Right cardiac atrium (tissue), 5 donors: ENCODE measurements at regions of chr11 and their contacts with region 1.

Region 1: GRCh38 chr11:122505304-122506006 is 150.1 kb upstream of the UBASH3B start:
- DNase-seq: peak; percentile 81 to 93 (median 83)
- ATAC-seq: peak; percentile 97 to 98
- H3K4me3 ChIP-seq: no peak overlapping the region
- H3K27ac ChIP-seq: no peak overlapping the region
- H3K4me1 ChIP-seq: peaks cover 2% of the 10 kb centered on the region
- H3K27me3 ChIP-seq: no peaks in the 10 kb centered on the region

Region 2: DNA sequence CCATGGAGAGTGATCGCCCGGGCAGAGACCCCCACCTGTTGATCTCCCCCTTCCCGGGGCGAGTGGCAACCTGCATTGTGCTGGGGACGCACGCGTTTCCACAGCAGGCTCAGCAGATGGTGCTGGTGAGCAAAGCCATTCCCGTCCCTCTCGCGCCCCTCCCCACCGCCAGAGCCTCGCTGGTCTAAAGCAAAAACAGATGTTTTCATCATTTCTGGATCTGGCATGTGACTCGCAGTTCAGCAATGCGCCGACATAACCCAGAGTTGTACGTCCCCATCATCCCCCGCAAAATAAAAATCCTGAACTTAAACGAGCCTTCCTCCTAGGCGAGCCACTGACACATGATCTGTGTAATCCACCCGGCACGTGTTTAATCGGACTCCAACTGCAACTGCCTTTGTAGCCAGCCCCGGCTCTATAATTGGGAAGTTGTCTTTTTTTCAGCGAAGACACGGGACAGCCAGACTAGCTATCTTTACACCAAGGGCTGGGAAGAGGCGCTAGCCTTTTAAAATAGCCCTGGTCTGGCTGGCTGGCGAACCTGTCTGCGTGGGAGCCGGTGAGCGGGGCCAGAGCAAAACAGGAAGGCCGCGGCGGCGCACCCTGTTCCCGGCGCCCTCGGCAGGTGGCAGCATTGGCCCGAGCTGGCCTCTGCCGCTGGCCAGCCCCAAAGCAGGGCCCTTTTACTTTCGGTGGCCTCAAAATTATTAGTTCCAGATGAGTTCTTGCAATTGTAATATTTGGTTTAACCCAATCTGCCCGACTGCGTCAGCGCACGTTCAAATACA is 849.7 kb before region 1 on chr11:
- intact Hi-C with region 1: loop called (anchors 2 to 5 kb)
- DNase-seq: peak; percentile 88 to 96 (median 95)
- ATAC-seq: peak; percentile 96 to 97
- H3K4me3 ChIP-seq: peak overlapping the region; percentile 48
- H3K27ac ChIP-seq: peak overlapping the region; percentile 93
- H3K4me1 ChIP-seq: peaks cover 1% of the 10 kb centered on the region
- H3K27me3 ChIP-seq: no peaks in the 10 kb centered on the region

Region 3: GRCh38 chr11:122101625-122102291 is 403.7 kb before region 1 on chr11:
- intact Hi-C with region 1: loop called in 1 of 4 experiments (anchors 5 kb)
- DNase-seq: peak; percentile 61 to 84 (median 82)
- ATAC-seq: peak; percentile 86 to 91
- H3K4me3 ChIP-seq: peak overlapping the region; percentile 91
- H3K27ac ChIP-seq: peak overlapping the region; percentile 98
- H3K4me1 ChIP-seq: no peaks in the 10 kb centered on the region
- H3K27me3 ChIP-seq: no peaks in the 10 kb centered on the region

Region 4: GRCh38 chr11:122215244-122215992 is 290.0 kb before region 1 on chr11:
- intact Hi-C with region 1: loop called (anchors 5 to 10 kb)
- DNase-seq: peak; percentile 85 to 95 (median 93)
- ATAC-seq: peak; percentile 97
- H3K4me3 ChIP-seq: no peak overlapping the region
- H3K27ac ChIP-seq: peak overlapping the region; percentile 43
- H3K4me1 ChIP-seq: peaks cover 1% of the 10 kb centered on the region
- H3K27me3 ChIP-seq: no peaks in the 10 kb centered on the region

Region 5: GRCh38 chr11:122439911-122440810 is 65.3 kb before region 1 on chr11:
- intact Hi-C with region 1: loop called in 1 of 4 experiments (anchors 10 kb)
- DNase-seq: peak; percentile 64 to 81 (median 77)
- ATAC-seq: peak; percentile 90
- H3K4me3 ChIP-seq: peak overlapping the region; percentile 72
- H3K27ac ChIP-seq: peak overlapping the region; percentile 86
- H3K4me1 ChIP-seq: no peaks in the 10 kb centered on the region
- H3K27me3 ChIP-seq: no peaks in the 10 kb centered on the region